ENCODE measurements at regions of chr1 and their contacts with region 1.

Region 1: DNA sequence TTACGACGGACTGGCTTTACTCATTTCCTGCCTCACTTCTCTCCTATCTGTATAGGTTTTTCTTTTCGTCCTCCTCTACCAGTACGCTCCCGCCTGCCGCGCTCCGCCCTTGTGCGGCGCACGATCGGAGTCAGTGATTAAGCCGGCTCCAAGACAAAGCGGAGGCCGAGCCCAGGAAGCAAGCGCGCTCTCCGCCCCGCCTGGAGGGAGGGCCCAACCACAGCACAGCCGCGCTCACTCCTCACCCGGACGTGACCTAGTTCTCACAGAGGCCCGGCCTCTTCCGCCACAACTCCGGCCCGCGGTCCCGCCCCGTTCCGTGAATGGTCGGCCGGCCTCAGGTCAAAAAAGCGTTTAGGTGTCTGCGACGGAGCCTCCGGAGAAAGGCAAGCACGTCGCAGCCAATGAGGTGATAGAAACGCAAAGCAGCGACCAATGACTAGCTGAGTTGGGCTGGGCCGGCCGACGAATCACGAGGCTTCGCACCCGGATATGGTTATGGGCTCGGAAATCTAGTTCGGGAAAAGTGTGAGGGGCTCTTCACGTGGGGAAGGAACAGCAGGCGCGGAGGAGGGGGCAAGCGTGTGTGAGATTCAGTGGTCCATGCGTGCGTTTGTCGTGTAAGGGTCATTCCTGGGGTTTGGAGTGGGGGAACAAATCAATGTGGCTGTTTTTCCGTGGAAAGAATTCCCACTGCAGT is at the start of gene METTL13:
- DNase-seq: peak; percentile 97 to 100 (median 98)
- ATAC-seq: peak; percentile 98
- H3K4me3 ChIP-seq: peak within 1 kb of the TSS; percentile 76
- H3K27ac ChIP-seq: peak within 1 kb of the TSS; percentile 97
- H3K4me1 ChIP-seq: peaks cover 17 to 28% of the 10 kb centered on the region in 2 experiments; a peak in 4 of 5 replicates
- H3K27me3 ChIP-seq: no peaks in the 10 kb centered on the region
- CTCF ChIP-seq: peak in 1 of 3 experiments; percentile 7; a peak in 1 of 6 replicates
- EP300 ChIP-seq: 0 out of 2 replicates have a peak, but pooled peaks have one; percentile 7
- POLR2A ChIP-seq: peak; percentile 95
- RAD21 ChIP-seq: no peak; a peak in 1 of 4 replicates
- polyA plus RNA-seq, gene METTL13: 18.9 to 23.4 TPM

Region 2: GRCh38 chr1:171576144-171576543 is 205.2 kb before region 1 on chr1:
- CTCF ChIA-PET with region 1: no interaction called
- POLR2A ChIA-PET with region 1: no interaction called
- in situ Hi-C with region 1: no loop called
- intact Hi-C with region 1: no loop called
- DNase-seq: no peak
- ATAC-seq: no peak
- H3K4me3 ChIP-seq: no peak overlapping the region
- H3K27ac ChIP-seq: no peak overlapping the region
- H3K4me1 ChIP-seq: no peaks in the 10 kb centered on the region
- H3K27me3 ChIP-seq: no peaks in the 10 kb centered on the region
- CTCF ChIP-seq: no peak
- EP300 ChIP-seq: no peak
- POLR2A ChIP-seq: no peak
- RAD21 ChIP-seq: no peak

Region 3: DNA sequence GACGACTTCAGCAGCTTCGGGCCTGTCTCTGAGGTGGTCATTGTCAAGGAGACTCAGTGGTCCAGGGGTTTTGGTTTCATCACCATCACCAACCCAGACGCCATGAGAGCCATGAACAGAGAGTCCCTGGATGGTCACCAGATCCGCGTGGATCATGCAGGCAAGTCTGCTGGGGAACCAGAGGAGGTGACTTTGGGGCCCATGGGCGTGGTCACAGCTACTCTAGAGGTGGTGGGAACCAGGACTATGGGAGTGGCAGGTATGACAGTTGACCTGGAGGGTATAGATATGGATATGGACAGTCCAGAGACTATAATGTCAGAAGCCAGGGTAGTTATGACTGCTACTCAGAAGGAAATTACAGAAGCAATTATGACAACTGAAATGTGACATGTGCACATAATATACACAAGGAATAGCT is 19.2 kb before region 1 on chr1:
- CTCF ChIA-PET with region 1: no interaction called
- POLR2A ChIA-PET with region 1: interaction called, 8 read pairs
- in situ Hi-C with region 1: no loop called
- intact Hi-C with region 1: loop called (anchors 2 kb)
- DNase-seq: peak; percentile 76 to 95 (median 82)
- ATAC-seq: peak; percentile 94
- H3K4me3 ChIP-seq: no peak overlapping the region
- H3K27ac ChIP-seq: peak overlapping the region; percentile 57
- H3K4me1 ChIP-seq: peaks cover 14 to 25% of the 10 kb centered on the region in 2 experiments; a peak in 4 of 5 replicates
- H3K27me3 ChIP-seq: no peaks in the 10 kb centered on the region
- CTCF ChIP-seq: no peak
- EP300 ChIP-seq: peak; percentile 89
- POLR2A ChIP-seq: peak; percentile 73
- RAD21 ChIP-seq: no peak

Measured in K562 (cell line).